OCI-LY7 (cell line): ENCODE measurements at regions of chr2 and their contacts with region 1.

Region 1: DNA sequence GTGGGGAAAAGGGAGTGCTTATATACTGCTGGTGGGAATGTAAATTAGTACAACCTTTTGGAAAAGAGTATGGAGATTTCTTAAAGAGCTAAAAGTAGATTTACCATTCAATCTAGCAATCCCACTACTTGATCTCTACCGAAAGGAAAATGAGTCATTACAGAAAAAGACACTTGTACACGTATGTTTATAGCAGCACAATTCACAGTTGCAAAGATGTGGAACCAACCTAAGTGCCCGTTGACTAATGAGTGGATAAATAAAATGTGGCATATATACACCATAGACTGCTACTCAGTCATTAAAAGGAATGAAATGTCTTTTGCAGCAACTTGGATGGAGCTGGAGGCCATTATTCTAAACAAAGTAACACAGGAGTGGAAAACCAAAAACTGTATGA is 29.5 kb downstream of the FLACC1 start:
- DNase-seq: no peak
- H3K4me3 ChIP-seq: no peak overlapping the region
- H3K27ac ChIP-seq: no peak overlapping the region
- H3K4me1 ChIP-seq: no peaks in the 10 kb centered on the region
- CTCF ChIP-seq: no peak

Region 2: DNA sequence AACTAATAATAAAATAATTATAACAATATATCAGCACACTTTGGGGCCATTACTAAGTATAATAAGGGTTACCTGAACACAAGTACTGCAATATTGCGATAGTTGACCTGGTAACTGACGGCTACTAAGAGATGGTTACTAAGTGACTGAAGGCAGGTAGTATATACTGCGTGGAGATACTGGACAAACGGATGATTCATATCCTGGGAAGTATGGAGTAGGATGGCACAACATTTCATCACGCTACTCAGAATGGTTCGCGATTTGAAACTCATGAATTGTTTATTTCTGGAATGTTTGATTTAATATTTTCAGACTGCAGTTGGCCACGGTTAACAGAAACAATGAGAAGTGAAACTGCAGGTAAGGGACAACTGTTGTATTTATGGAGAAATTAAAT is 68.9 kb after region 1 on chr2:
- CTCF ChIA-PET with region 1: no interaction called
- POLR2A ChIA-PET with region 1: no interaction called
- intact Hi-C with region 1: loop called (anchors 2 kb)
- DNase-seq: no peak
- H3K4me3 ChIP-seq: no peak overlapping the region
- H3K27ac ChIP-seq: no peak overlapping the region
- H3K4me1 ChIP-seq: no peaks in the 10 kb centered on the region
- CTCF ChIP-seq: no peak